Naive thymus-derived CD4-positive, alpha-beta T cell (primary cell): ENCODE measurements at regions of chr12 and their contacts with region 1.

Region 1: DNA sequence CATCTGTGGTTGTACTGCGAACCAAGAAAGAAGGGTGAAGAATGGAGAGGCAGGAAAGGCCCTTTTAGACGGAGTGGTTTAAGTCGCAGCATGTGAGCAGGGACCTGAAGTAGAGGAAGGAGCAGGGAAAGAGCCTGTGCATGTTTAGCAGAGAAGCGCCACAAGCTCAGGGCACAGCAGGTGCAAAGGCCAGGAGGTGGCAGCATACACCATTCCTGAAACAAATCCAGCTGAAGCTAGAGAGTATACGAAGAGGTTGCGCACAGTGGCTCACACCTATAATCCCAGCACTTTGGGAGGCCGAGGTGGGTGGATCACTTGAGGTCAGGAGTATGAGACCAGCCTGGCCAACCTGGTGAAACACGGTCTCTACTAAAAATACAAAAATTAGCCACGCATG is 49.9 kb downstream of the HELB start:
- DNase-seq: no peak
- ATAC-seq: peak; percentile 34
- H3K4me3 ChIP-seq: no peak overlapping the region
- H3K4me3 Mint-ChIP-seq: no peak overlapping the region
- H3K27ac ChIP-seq: no peak overlapping the region
- H3K27ac Mint-ChIP-seq: peak overlapping the region in 4 of 9 donors; percentile 42 to 75 (median 58)
- H3K4me1 ChIP-seq: no peaks in the 10 kb centered on the region
- H3K4me1 Mint-ChIP-seq: peaks cover 0 to 7% (median 0%) of the 10 kb centered on the region in 7 donors
- H3K27me3 ChIP-seq: no peaks in the 10 kb centered on the region
- H3K27me3 Mint-ChIP-seq: no peaks in the 10 kb centered on the region

Region 2: DNA sequence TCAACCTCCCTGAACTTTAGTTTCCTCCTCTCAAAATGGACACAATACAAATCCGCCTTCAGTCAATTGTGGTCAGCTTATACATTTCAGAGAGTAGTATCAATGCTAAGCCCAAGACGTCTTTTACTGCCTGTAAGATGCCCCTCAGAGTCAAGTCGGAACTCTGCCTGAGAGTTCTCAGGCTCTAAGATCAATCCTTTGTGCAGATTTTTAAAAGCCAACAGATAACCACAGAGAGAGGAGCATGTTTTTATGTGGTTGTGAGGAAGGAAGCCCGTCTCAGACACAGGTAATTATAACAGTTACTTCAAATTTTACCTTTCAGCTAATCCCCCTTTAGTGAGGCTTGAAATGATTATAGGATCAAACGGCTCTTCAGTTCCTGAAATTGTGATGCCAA is 41.7 kb after region 1 on chr12:
- CTCF ChIA-PET with region 1: no interaction called
- POLR2A ChIA-PET with region 1: no interaction called
- intact Hi-C with region 1: loop called in 1 of 2 experiments (anchors 5 kb)
- DNase-seq: peak in 7 of 9 donors; percentile 8 to 64 (median 45)
- ATAC-seq: peak; percentile 76
- H3K4me3 ChIP-seq: no peak overlapping the region
- H3K4me3 Mint-ChIP-seq: peak overlapping the region; percentile 33 to 76 (median 62)
- H3K27ac ChIP-seq: no peak overlapping the region
- H3K27ac Mint-ChIP-seq: no peak overlapping the region
- H3K4me1 ChIP-seq: peaks cover 12 to 15% of the 10 kb centered on the region in 2 donors
- H3K4me1 Mint-ChIP-seq: peaks cover 14 to 29% (median 23%) of the 10 kb centered on the region in 7 donors
- H3K27me3 ChIP-seq: no peaks in the 10 kb centered on the region
- H3K27me3 Mint-ChIP-seq: peaks cover 13 to 51% (median 32%) of the 10 kb centered on the region in 5 donors

Region 3: GRCh38 chr12:66417217-66417616 is 65.0 kb after region 1 on chr12:
- CTCF ChIA-PET with region 1: no interaction called
- POLR2A ChIA-PET with region 1: no interaction called
- intact Hi-C with region 1: no loop called
- DNase-seq: no peak
- ATAC-seq: no peak
- H3K4me3 ChIP-seq: no peak overlapping the region
- H3K4me3 Mint-ChIP-seq: no peak overlapping the region
- H3K27ac ChIP-seq: no peak overlapping the region
- H3K27ac Mint-ChIP-seq: no peak overlapping the region
- H3K4me1 ChIP-seq: no peaks in the 10 kb centered on the region
- H3K4me1 Mint-ChIP-seq: no peaks in the 10 kb centered on the region
- H3K27me3 ChIP-seq: no peaks in the 10 kb centered on the region
- H3K27me3 Mint-ChIP-seq: peaks cover 0 to 62% (median 9%) of the 10 kb centered on the region in 5 donors

Region 4: GRCh38 chr12:66428261-66428660 is 76.1 kb after region 1 on chr12:
- CTCF ChIA-PET with region 1: no interaction called
- POLR2A ChIA-PET with region 1: no interaction called
- intact Hi-C with region 1: loop called in 1 of 2 experiments (anchors 5 kb)
- DNase-seq: no peak
- ATAC-seq: no peak
- H3K4me3 ChIP-seq: no peak overlapping the region
- H3K4me3 Mint-ChIP-seq: no peak overlapping the region
- H3K27ac ChIP-seq: no peak overlapping the region
- H3K27ac Mint-ChIP-seq: no peak overlapping the region
- H3K4me1 ChIP-seq: no peaks in the 10 kb centered on the region
- H3K4me1 Mint-ChIP-seq: no peaks in the 10 kb centered on the region
- H3K27me3 ChIP-seq: peaks cover 0 to 4% of the 10 kb centered on the region in 2 donors
- H3K27me3 Mint-ChIP-seq: peaks cover 0 to 12% (median 0%) of the 10 kb centered on the region in 5 donors